H1 (cell line): ENCODE measurements at regions of chr18 and their contacts with region 1.

Region 1: GRCh38 chr18:58135701-58136331 is 91.8 kb downstream of the NEDD4L start:
- DNase-seq: peak; percentile 43 to 70
- H3K4me3 ChIP-seq: no peak overlapping the region
- H3K27ac ChIP-seq: no peak overlapping the region
- H3K4me1 ChIP-seq: peaks cover 2 to 17% (median 9%) of the 10 kb centered on the region in 4 experiments; a peak in 5 of 7 replicates
- H3K27me3 ChIP-seq: no peaks in the 10 kb centered on the region
- CTCF ChIP-seq: peak; percentile 76 to 96 (median 94)
- EP300 ChIP-seq: no peak
- POLR2A ChIP-seq: no peak
- RAD21 ChIP-seq: peak; percentile 71 to 81

Region 2: GRCh38 chr18:58087917-58088692 is 47.7 kb before region 1 on chr18:
- CTCF ChIA-PET with region 1: no interaction called
- POLR2A ChIA-PET with region 1: no interaction called
- DNase-seq: no peak
- H3K4me3 ChIP-seq: 0 out of 8 replicates have a peak overlapping the region, but pooled peaks of 1 of the 4 experiments have one; percentile 17
- H3K27ac ChIP-seq: no peak overlapping the region
- H3K4me1 ChIP-seq: peaks cover 4 to 16% (median 8%) of the 10 kb centered on the region in 4 experiments
- H3K27me3 ChIP-seq: no peaks in the 10 kb centered on the region
- CTCF ChIP-seq: no peak
- EP300 ChIP-seq: no peak
- POLR2A ChIP-seq: no peak
- RAD21 ChIP-seq: no peak

Region 3: DNA sequence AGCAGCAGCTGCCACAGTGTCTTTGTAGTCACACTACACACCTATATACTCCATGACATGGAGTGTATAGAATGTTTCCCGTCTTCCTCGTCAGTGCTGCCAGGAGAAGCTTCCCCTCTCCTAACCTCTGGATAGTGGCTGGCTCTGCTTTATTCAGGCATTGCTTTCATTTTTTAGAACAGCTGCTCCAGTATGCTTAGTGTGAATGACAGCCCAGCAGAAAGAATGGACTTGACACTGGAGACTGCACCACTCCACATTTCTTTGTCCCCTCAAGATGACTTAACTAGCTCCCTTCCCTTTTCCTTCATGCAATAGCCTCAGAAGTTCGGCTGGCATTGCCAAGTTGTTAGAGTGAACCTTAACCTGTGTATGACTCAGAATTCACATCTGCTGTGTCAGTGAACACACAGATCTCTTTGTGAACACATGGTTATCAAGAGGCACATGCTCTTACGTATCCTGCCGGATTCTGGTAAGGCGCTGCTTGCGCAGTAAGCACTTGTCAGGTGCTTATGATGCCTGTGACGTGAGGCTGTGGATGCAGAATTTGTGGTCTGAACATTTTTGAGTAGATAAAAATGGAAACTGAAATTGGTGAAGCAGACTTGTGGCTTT is 17.9 kb before region 1 on chr18:
- CTCF ChIA-PET with region 1: interaction called, 21 read pairs
- POLR2A ChIA-PET with region 1: no interaction called
- DNase-seq: no peak
- H3K4me3 ChIP-seq: no peak overlapping the region
- H3K27ac ChIP-seq: no peak overlapping the region
- H3K4me1 ChIP-seq: peaks cover 0 to 16% (median 5%) of the 10 kb centered on the region in 4 experiments; a peak in 6 of 7 replicates
- H3K27me3 ChIP-seq: no peaks in the 10 kb centered on the region
- CTCF ChIP-seq: no peak
- EP300 ChIP-seq: no peak
- POLR2A ChIP-seq: no peak
- RAD21 ChIP-seq: no peak

Region 4: DNA sequence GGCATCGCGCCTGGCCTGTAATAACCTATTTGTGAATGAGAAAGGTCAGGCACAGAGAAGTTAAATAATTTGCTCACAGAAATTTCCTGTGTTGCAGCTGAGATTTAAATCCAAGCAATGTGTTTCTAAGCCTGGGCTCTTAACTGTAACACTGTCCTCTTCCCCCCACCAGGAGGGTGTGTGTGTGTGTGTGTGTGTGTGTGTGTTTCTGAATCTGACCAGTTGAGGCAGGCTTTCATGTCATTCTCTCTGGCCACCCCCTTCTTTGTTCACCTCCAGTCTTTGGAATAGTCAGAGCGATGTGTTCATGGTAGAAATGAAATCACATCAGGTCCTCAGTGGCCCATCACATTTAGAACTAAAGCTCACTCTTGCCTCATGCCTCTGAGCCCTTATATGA is 10.6 kb before region 1 on chr18:
- CTCF ChIA-PET with region 1: interaction called, 22 read pairs
- POLR2A ChIA-PET with region 1: no interaction called
- DNase-seq: peak in 1 of 2 experiments; percentile 45
- H3K4me3 ChIP-seq: no peak overlapping the region
- H3K27ac ChIP-seq: no peak overlapping the region
- H3K4me1 ChIP-seq: no peaks in the 10 kb centered on the region
- H3K27me3 ChIP-seq: no peaks in the 10 kb centered on the region
- CTCF ChIP-seq: peak in 1 of 3 experiments; percentile 51; a peak in 2 of 4 replicates
- EP300 ChIP-seq: no peak
- POLR2A ChIP-seq: no peak
- RAD21 ChIP-seq: no peak; a peak in 1 of 4 replicates

Region 5: DNA sequence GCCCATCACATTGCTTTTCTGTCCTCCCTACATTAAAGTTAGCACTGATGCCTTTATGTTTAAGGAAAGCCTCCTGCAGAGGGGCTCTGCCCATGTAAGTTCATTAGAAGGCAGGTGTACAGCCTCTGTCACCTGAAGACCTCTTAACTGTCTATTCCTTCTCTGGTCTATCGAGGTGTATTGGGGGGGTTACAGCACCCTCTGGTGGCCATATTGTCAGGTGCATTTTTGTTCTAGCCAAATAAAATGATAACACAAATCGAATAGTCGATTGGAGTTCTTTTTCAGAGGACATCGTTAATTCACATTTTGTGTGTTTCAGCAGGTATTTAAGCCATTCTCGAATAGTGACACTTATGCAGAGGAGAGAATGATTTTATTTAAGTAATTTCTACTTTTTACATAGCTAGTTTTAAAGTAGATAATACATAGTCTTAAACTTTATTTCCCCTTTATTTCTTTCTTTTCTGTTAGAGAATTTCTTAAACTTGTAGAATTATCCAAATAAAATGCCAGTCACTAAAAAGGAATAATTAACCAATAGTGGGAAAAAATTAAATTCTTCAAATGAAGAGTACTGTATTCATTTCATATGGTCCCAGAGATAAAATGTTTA is 45.0 kb after region 1 on chr18:
- CTCF ChIA-PET with region 1: interaction called, 10 read pairs
- POLR2A ChIA-PET with region 1: no interaction called
- DNase-seq: peak in 1 of 2 experiments; percentile 82
- H3K4me3 ChIP-seq: no peak overlapping the region
- H3K27ac ChIP-seq: no peak overlapping the region
- H3K4me1 ChIP-seq: peaks cover 0 to 17% (median 7%) of the 10 kb centered on the region in 4 experiments; a peak in 4 of 7 replicates
- H3K27me3 ChIP-seq: no peaks in the 10 kb centered on the region
- CTCF ChIP-seq: peak in 2 of 3 experiments; percentile 76 to 87; a peak in 3 of 4 replicates
- EP300 ChIP-seq: no peak
- POLR2A ChIP-seq: no peak
- RAD21 ChIP-seq: peak; percentile 74 to 83